ENCODE measurements at regions of chr13 and their contacts with region 1.

Region 1: GRCh38 chr13:49585220-49586157 is at the start of gene RCBTB1:
- DNase-seq: peak; percentile 33 to 88 (median 68)
- ATAC-seq: peak; percentile 88
- H3K4me3 ChIP-seq: peak within 1 kb of the TSS; percentile 89 to 97
- H3K4me3 Mint-ChIP-seq: peak within 1 kb of the TSS; percentile 90
- H3K27ac ChIP-seq: peak within 1 kb of the TSS; percentile 71 to 86
- H3K27ac Mint-ChIP-seq: peak within 1 kb of the TSS; percentile 92
- H3K4me1 ChIP-seq: peaks cover 9% of the 10 kb centered on the region
- H3K4me1 Mint-ChIP-seq: peaks cover 36% of the 10 kb centered on the region
- H3K27me3 ChIP-seq: no peaks in the 10 kb centered on the region
- H3K27me3 Mint-ChIP-seq: no peaks in the 10 kb centered on the region
- CTCF ChIP-seq: no peak
- total RNA-seq, gene RCBTB1: 12.1 to 14.2 TPM

Region 2: GRCh38 chr13:49495783-49496762 is 89.4 kb before region 1 on chr13 and contains the start of gene PHF11:
- CTCF ChIA-PET with region 1: no interaction called
- POLR2A ChIA-PET with region 1: interaction called, 7 read pairs
- intact Hi-C with region 1: loop called (anchors 1 to 2 kb)
- DNase-seq: peak; percentile 67 to 94 (median 87)
- ATAC-seq: peak; percentile 80
- H3K4me3 ChIP-seq: peak within 1 kb of the TSS; percentile 68 to 88
- H3K4me3 Mint-ChIP-seq: peak within 1 kb of the TSS; percentile 96
- H3K27ac ChIP-seq: peak within 1 kb of the TSS; percentile 90 to 96
- H3K27ac Mint-ChIP-seq: peak within 1 kb of the TSS; percentile 99
- H3K4me1 ChIP-seq: peaks cover 20% of the 10 kb centered on the region
- H3K4me1 Mint-ChIP-seq: peaks cover 47% of the 10 kb centered on the region
- H3K27me3 ChIP-seq: no peaks in the 10 kb centered on the region
- H3K27me3 Mint-ChIP-seq: no peaks in the 10 kb centered on the region
- CTCF ChIP-seq: no peak
- total RNA-seq, gene PHF11: 93.9 to 98.3 TPM

Region 3: GRCh38 chr13:49690992-49691886 is 105.8 kb after region 1 on chr13 and contains the start of gene EBPL:
- CTCF ChIA-PET with region 1: no interaction called
- POLR2A ChIA-PET with region 1: no interaction called
- intact Hi-C with region 1: loop called (anchors 1 to 5 kb)
- DNase-seq: peak; percentile 65 to 91 (median 88)
- ATAC-seq: peak; percentile 96
- H3K4me3 ChIP-seq: peak within 1 kb of the TSS; percentile 89
- H3K4me3 Mint-ChIP-seq: peak within 1 kb of the TSS; percentile 91
- H3K27ac ChIP-seq: peak within 1 kb of the TSS; percentile 41 to 47
- H3K27ac Mint-ChIP-seq: peak within 1 kb of the TSS; percentile 62
- H3K4me1 ChIP-seq: peaks cover 15% of the 10 kb centered on the region
- H3K4me1 Mint-ChIP-seq: peaks cover 23% of the 10 kb centered on the region
- H3K27me3 ChIP-seq: no peaks in the 10 kb centered on the region
- H3K27me3 Mint-ChIP-seq: no peaks in the 10 kb centered on the region
- CTCF ChIP-seq: peak; percentile 15
- total RNA-seq, gene EBPL: 9.5 to 10.7 TPM

Region 4: GRCh38 chr13:49936085-49936940 is 350.8 kb after region 1 on chr13 and contains the start of gene SPRYD7:
- CTCF ChIA-PET with region 1: no interaction called
- POLR2A ChIA-PET with region 1: no interaction called
- intact Hi-C with region 1: loop called (anchors 1 to 10 kb)
- DNase-seq: peak; percentile 82 to 97 (median 94)
- ATAC-seq: peak; percentile 85
- H3K4me3 ChIP-seq: peak within 1 kb of the TSS; percentile 81 to 98
- H3K4me3 Mint-ChIP-seq: peak within 1 kb of the TSS; percentile 88
- H3K27ac ChIP-seq: peak within 1 kb of the TSS; percentile 37 to 44
- H3K27ac Mint-ChIP-seq: peak within 1 kb of the TSS; percentile 81
- H3K4me1 ChIP-seq: peaks cover 14% of the 10 kb centered on the region
- H3K4me1 Mint-ChIP-seq: peaks cover 19% of the 10 kb centered on the region
- H3K27me3 ChIP-seq: no peaks in the 10 kb centered on the region
- H3K27me3 Mint-ChIP-seq: no peaks in the 10 kb centered on the region
- CTCF ChIP-seq: peak; percentile 62
- total RNA-seq, gene SPRYD7: 1.2 to 1.4 TPM

Measured in CD8-positive, alpha-beta T cell (primary cell).